Astrocyte of the cerebellum (primary cell): ENCODE measurements at regions of chr17 and their contacts with region 1.

Region 1: GRCh38 chr17:48915459-48916282 is 7.5 kb downstream of the UBE2Z start:
- DNase-seq: peak; percentile 82
- H3K4me3 ChIP-seq: no peak overlapping the region
- CTCF ChIP-seq: no peak

Region 2: GRCh38 chr17:48871551-48872351 is 43.9 kb before region 1 on chr17:
- in situ Hi-C with region 1: no loop called
- DNase-seq: no peak
- H3K4me3 ChIP-seq: no peak overlapping the region
- CTCF ChIP-seq: no peak

Region 3: GRCh38 chr17:48970224-48970623 is 54.6 kb after region 1 on chr17:
- in situ Hi-C with region 1: no loop called
- DNase-seq: no peak
- H3K4me3 ChIP-seq: no peak overlapping the region
- CTCF ChIP-seq: no peak

Region 4: GRCh38 chr17:49016788-49017463 is 101.3 kb after region 1 on chr17:
- in situ Hi-C with region 1: loop called (anchors 10 kb)
- DNase-seq: no peak
- H3K4me3 ChIP-seq: no peak overlapping the region
- CTCF ChIP-seq: no peak